CD8-positive, alpha-beta memory T cell (primary cell): ENCODE measurements at regions of chr16 and their contacts with region 1.

Region 1: GRCh38 chr16:82544378-82545160 is 82.2 kb upstream of the CDH13 start:
- DNase-seq: no peak
- H3K4me3 ChIP-seq: no peak overlapping the region
- H3K4me3 Mint-ChIP-seq: no peak overlapping the region
- H3K27ac ChIP-seq: no peak overlapping the region
- H3K27ac Mint-ChIP-seq: no peak overlapping the region
- H3K4me1 ChIP-seq: no peaks in the 10 kb centered on the region
- H3K4me1 Mint-ChIP-seq: no peaks in the 10 kb centered on the region
- H3K27me3 ChIP-seq: no peaks in the 10 kb centered on the region
- H3K27me3 Mint-ChIP-seq: peaks cover 3 to 16% of the 10 kb centered on the region in 2 donors

Region 2: DNA sequence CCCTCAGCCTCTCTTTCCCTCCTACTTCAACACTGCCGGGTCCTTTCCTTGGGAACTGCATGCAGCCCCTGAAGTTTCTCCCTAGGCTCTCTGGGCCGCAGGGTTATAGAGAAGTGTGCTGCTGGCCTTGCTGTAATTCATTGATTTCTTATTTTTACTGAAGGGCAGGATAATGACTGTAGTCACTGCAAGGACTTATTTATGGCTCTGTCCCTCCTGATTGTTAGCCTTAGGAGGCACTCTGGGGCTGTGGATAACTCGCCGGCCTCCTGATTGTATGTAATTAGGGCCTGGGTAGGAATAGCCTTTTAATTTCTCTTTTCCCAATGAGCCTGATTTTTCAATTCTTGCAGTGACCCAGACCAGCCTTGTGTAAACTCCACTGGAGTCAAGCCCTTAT is 56.1 kb before region 1 on chr16:
- CTCF ChIA-PET with region 1: no interaction called
- POLR2A ChIA-PET with region 1: interaction called, 16 read pairs
- DNase-seq: no peak
- H3K4me3 ChIP-seq: no peak overlapping the region
- H3K4me3 Mint-ChIP-seq: no peak overlapping the region
- H3K27ac ChIP-seq: no peak overlapping the region
- H3K27ac Mint-ChIP-seq: no peak overlapping the region
- H3K4me1 ChIP-seq: no peaks in the 10 kb centered on the region
- H3K4me1 Mint-ChIP-seq: no peaks in the 10 kb centered on the region
- H3K27me3 ChIP-seq: no peaks in the 10 kb centered on the region
- H3K27me3 Mint-ChIP-seq: peaks cover 0 to 9% of the 10 kb centered on the region in 2 donors

Region 3: GRCh38 chr16:82509691-82510430 is 34.7 kb before region 1 on chr16:
- CTCF ChIA-PET with region 1: no interaction called
- POLR2A ChIA-PET with region 1: no interaction called
- DNase-seq: no peak
- H3K4me3 ChIP-seq: no peak overlapping the region
- H3K4me3 Mint-ChIP-seq: no peak overlapping the region
- H3K27ac ChIP-seq: no peak overlapping the region
- H3K27ac Mint-ChIP-seq: no peak overlapping the region
- H3K4me1 ChIP-seq: no peaks in the 10 kb centered on the region
- H3K4me1 Mint-ChIP-seq: no peaks in the 10 kb centered on the region
- H3K27me3 ChIP-seq: no peaks in the 10 kb centered on the region
- H3K27me3 Mint-ChIP-seq: peaks cover 0 to 4% of the 10 kb centered on the region in 2 donors

Region 4: DNA sequence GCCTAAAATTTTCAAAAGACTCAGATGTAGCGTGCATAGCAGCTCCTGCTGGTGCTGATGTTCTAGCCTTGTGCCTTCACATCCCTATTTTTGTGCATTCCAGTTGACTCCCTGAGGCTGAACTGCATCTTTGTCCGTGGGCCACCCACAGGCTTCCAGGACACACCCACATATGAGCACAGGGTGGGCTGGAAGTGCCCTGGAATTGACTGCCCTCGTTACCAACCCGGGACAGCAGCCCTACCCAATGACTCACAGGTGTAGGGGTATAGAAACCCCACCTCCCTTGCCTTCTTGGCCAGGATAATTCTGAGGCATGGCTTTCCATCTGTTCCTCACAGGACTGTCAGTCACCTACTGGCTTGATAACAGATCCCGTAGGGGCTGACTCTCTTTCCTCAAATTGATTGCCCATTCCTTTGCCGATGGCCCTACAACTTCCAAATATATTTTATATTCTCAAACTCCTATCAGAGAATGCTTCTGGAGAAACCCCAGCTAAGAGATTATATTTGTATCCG is 16.3 kb after region 1 on chr16:
- CTCF ChIA-PET with region 1: no interaction called
- POLR2A ChIA-PET with region 1: no interaction called
- DNase-seq: no peak
- H3K4me3 ChIP-seq: no peak overlapping the region
- H3K4me3 Mint-ChIP-seq: no peak overlapping the region
- H3K27ac ChIP-seq: no peak overlapping the region
- H3K27ac Mint-ChIP-seq: peak overlapping the region in 1 of 8 donors; percentile 16
- H3K4me1 ChIP-seq: no peaks in the 10 kb centered on the region
- H3K4me1 Mint-ChIP-seq: peaks cover 0 to 2% (median 0%) of the 10 kb centered on the region in 3 donors
- H3K27me3 ChIP-seq: no peaks in the 10 kb centered on the region
- H3K27me3 Mint-ChIP-seq: peaks cover 0 to 1% of the 10 kb centered on the region in 2 donors

Region 5: GRCh38 chr16:82671741-82672140 is 127.2 kb after region 1 on chr16:
- CTCF ChIA-PET with region 1: no interaction called
- POLR2A ChIA-PET with region 1: no interaction called
- DNase-seq: peak in 2 of 5 donors; percentile 16 to 26
- H3K4me3 ChIP-seq: no peak overlapping the region
- H3K4me3 Mint-ChIP-seq: no peak overlapping the region
- H3K27ac ChIP-seq: no peak overlapping the region
- H3K27ac Mint-ChIP-seq: no peak overlapping the region
- H3K4me1 ChIP-seq: no peaks in the 10 kb centered on the region
- H3K4me1 Mint-ChIP-seq: no peaks in the 10 kb centered on the region
- H3K27me3 ChIP-seq: no peaks in the 10 kb centered on the region
- H3K27me3 Mint-ChIP-seq: peaks cover 0 to 2% of the 10 kb centered on the region in 2 donors